Right ventricle myocardium inferior (tissue), 1 donor: ENCODE measurements at regions of chr7 and their contacts with region 1.

Region 1: GRCh38 chr7:8295638-8296361 is 33.8 kb upstream of the ICA1 start:
- DNase-seq: no peak
- ATAC-seq: peak; percentile 89

Region 2: GRCh38 chr7:7595451-7595850 is 700.3 kb before region 1 on chr7:
- intact Hi-C with region 1: loop called (anchors 10 kb)
- DNase-seq: no peak
- ATAC-seq: no peak

Region 3: DNA sequence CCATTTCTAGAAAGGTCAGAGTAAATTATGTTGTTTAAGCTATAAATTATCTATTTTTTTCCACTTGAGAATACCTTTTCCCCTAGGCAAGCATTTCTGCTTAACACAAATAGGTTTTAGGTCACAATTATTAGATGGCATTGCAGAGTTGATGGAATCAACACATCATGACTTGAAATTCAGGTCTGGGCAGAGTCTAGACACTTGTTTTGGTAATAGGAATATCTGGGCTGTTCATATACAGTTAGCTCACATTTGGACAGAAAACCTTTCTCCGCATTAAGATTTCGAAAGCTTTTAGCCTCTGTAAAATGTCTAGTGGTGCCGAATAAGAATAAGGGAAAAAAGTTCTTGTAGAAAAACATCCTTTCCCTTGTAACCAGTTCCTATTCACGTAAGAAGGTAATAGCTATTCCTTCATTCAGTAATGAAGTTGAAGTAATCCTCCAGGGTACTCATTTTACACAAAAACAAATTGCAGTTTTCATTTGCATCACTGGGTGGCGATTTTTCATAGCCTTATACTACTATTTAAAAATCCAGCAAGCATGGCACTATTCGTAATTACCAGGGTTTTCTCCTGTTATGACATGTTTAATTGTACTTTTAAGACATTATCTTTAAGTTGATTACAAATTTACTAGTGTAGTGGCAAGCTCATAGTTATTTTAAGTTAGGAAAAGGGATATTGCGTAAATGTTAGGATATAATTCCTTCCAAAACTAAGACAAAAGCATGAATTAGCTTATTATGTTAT is 614.4 kb before region 1 on chr7:
- intact Hi-C with region 1: loop called (anchors 10 kb)
- DNase-seq: no peak
- ATAC-seq: peak; percentile 86

Region 4: DNA sequence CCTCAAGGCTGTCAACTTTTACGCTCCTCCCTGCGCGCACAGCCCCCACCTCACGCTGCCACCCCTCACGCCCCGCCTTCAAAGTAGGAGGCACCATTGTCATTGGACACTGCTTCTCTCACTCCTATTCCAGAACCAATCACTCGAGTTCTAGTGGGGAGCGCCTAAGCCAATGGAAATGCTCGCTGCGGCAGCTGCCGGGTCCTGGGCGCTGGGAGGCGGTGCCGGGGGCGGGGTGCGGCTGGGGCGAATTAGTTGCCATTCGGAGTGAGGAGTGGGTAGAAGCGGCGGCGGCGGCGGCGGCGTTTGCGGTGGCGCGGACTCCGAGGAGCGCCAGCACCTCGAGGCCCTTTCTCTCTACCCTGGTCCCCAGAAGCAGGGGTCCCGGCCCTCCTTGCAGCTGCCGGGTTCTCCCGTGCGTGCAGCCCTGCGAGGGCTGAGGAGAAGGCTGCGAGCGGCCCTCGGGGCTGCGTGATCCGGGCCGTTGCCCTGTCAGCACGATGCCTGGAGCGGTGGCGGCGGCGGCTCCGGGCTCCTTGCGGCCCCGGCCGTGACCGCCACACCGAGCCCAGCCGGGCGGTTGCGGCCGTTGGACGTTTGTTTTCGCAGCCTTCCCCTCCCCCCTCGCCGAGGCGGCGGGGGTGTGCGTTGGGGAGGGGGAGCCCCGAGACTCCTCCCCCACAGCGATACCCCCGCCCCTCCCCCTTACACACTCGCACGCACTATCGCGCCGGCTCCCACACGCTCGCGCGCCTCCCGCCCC is 327.1 kb before region 1 on chr7 and contains the start of gene GLCCI1:
- intact Hi-C with region 1: loop called (anchors 10 kb)
- DNase-seq: peak; percentile 97
- ATAC-seq: peak; percentile 99
- total RNA-seq, gene GLCCI1: 5.7 TPM